Transverse colon (tissue), 4 donors: ENCODE measurements at regions of chr1 and their contacts with region 1.

Region 1: GRCh38 chr1:182604169-182605164 is at the start of gene RGS16:
- DNase-seq: peak; percentile 96
- H3K4me3 ChIP-seq: peak within 1 kb of the TSS; percentile 25 to 53 (median 38)
- H3K27ac ChIP-seq: peak within 1 kb of the TSS; percentile 36 to 74 (median 48)
- H3K4me1 ChIP-seq: peaks cover 4 to 19% (median 11%) of the 10 kb centered on the region in 4 donors
- H3K27me3 ChIP-seq: no peaks in the 10 kb centered on the region
- CTCF ChIP-seq: no peak
- EP300 ChIP-seq: no peak
- POLR2A ChIP-seq: peak; percentile 59
- total RNA-seq, gene RGS16: 0.82 to 3.0 (median 1.7) TPM in 3 of 4 donors, not detected in the other

Region 2: DNA sequence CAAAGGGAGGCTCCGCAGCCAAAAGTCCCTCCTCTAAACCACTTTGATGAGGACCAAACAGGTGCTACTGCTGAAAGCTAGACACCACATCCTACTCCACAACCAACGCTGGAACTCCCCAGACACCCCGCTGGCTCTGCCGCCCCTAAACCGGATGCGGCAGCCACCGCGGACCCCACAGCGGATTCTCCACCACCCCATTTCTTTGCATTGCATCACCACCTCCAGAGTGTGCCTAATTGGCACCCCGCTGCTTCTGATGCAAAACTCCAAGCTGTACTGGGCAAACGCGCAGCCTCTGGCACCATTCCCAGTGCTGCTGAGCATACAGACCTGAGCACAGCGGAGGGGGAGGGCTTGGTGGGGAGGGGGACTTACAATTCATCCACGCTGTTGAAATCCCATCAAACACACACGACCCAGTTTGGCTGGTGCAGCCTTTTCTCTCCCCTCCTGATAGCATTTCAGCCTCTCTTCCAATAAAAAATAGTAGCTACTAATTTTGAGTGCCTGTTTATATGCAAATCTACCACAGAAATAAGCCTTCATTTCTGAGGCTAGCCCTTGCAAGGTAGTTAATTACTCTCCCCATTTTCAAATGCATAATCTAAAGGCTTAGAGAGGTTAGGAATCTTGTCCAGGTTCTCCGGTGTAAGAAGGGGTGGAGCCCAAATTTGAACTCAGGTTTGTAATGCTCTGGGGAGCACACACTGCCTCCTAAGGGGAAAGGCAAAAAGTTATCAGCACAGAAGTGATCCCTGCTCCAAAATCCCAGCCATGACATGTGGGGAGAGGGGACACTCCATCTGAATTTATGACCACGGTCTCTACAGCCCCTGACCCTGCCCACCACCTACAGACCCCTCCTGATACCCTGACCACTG is 11.9 kb after region 1 on chr1:
- in situ Hi-C with region 1: no loop called
- intact Hi-C with region 1: loop called (anchors 2 kb)
- DNase-seq: peak; percentile 66
- H3K4me3 ChIP-seq: peak overlapping the region in 1 of 4 donors; percentile 52
- H3K27ac ChIP-seq: peak overlapping the region; percentile 77 to 88 (median 82)
- H3K4me1 ChIP-seq: peaks cover 0 to 34% (median 24%) of the 10 kb centered on the region in 4 donors
- H3K27me3 ChIP-seq: peaks cover 34% of the 10 kb centered on the region
- CTCF ChIP-seq: no peak
- EP300 ChIP-seq: no peak
- POLR2A ChIP-seq: no peak

Region 3: GRCh38 chr1:182781841-182782586 is 177.5 kb after region 1 on chr1:
- in situ Hi-C with region 1: loop called (anchors 5 kb)
- intact Hi-C with region 1: loop called (anchors 2 kb)
- DNase-seq: peak; percentile 66
- H3K4me3 ChIP-seq: no peak overlapping the region
- H3K27ac ChIP-seq: no peak overlapping the region
- H3K4me1 ChIP-seq: no peaks in the 10 kb centered on the region
- H3K27me3 ChIP-seq: no peaks in the 10 kb centered on the region
- CTCF ChIP-seq: peak; percentile 40 to 53 (median 49)
- EP300 ChIP-seq: no peak
- POLR2A ChIP-seq: no peak